Psoas muscle (tissue), 8 donors: ENCODE measurements at regions of chr7 and their contacts with region 1.

Region 1: GRCh38 chr7:139823959-139824521 is 5.0 kb upstream of the TBXAS1 start:
- DNase-seq: no peak
- ATAC-seq: no peak
- H3K4me3 ChIP-seq: no peak overlapping the region
- H3K27ac ChIP-seq: no peak overlapping the region
- H3K4me1 ChIP-seq: no peaks in the 10 kb centered on the region
- H3K27me3 ChIP-seq: no peaks in the 10 kb centered on the region
- CTCF ChIP-seq: no peak

Region 2: DNA sequence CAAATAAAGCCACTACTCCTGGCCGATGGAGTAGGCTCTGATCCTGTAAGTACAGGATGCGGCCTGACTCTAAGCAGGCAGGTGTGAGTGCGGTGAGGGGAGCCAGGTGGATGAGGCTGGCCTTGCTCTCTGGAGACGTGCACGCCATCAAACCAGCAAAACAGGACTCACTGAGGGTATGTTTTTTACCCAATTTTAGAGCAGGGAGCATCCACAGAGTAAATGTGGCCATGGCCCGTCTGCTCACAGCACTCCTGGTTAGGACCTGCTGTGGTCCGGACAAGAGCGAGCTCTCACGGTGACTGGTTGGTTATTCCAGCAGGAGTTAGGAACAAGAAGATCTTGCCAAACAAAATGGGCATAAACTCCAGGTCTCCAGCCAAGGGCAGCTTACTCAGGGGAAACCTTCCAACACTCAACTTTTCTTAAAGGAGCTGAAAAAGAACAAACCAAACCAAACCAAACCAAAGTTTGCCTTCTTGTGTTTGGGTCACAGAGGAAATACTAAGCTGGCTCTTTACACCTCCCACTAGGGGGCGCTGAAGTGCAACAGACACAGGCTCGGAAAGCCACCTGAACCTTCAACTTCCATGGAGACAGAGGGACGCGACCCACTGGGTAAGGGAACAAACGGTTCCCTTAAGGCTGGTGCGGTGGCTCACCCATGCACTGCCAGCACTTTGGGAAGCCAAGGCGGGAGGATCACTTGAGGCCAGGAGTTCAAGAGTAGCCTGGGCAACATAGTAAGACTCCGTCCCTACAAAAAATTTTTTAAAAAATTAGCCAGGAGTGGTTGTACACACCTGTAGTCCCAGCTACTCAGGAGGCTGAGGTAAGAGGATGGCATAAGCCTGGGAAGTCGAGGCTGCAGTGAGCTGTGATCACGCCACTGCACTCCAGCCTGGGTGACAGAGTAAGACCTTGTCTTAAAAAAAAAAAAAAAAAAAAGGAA is 178.2 kb before region 1 on chr7:
- intact Hi-C with region 1: loop called in 1 of 2 experiments (anchors 5 kb)
- DNase-seq: peak; percentile 82 to 89
- ATAC-seq: peak; percentile 79 to 87 (median 83)
- H3K4me3 ChIP-seq: no peak overlapping the region
- H3K27ac ChIP-seq: no peak overlapping the region
- H3K4me1 ChIP-seq: peaks cover 25% of the 10 kb centered on the region
- H3K27me3 ChIP-seq: no peaks in the 10 kb centered on the region
- CTCF ChIP-seq: peak; percentile 92

Region 3: GRCh38 chr7:139875821-139876241 is 51.8 kb after region 1 on chr7:
- intact Hi-C with region 1: no loop called
- DNase-seq: no peak
- ATAC-seq: peak in 3 of 4 donors; percentile 74 to 85 (median 79)
- H3K4me3 ChIP-seq: no peak overlapping the region
- H3K27ac ChIP-seq: no peak overlapping the region
- H3K4me1 ChIP-seq: no peaks in the 10 kb centered on the region
- H3K27me3 ChIP-seq: no peaks in the 10 kb centered on the region
- CTCF ChIP-seq: no peak

Region 4: GRCh38 chr7:139936760-139937310 is 112.8 kb after region 1 on chr7:
- intact Hi-C with region 1: no loop called
- DNase-seq: no peak
- ATAC-seq: no peak
- H3K4me3 ChIP-seq: no peak overlapping the region
- H3K27ac ChIP-seq: no peak overlapping the region
- H3K4me1 ChIP-seq: no peaks in the 10 kb centered on the region
- H3K27me3 ChIP-seq: peaks cover 0 to 4% (median 3%) of the 10 kb centered on the region in 3 donors
- CTCF ChIP-seq: no peak